ENCODE measurements at regions of chrX and their contacts with region 1.

Region 1: DNA sequence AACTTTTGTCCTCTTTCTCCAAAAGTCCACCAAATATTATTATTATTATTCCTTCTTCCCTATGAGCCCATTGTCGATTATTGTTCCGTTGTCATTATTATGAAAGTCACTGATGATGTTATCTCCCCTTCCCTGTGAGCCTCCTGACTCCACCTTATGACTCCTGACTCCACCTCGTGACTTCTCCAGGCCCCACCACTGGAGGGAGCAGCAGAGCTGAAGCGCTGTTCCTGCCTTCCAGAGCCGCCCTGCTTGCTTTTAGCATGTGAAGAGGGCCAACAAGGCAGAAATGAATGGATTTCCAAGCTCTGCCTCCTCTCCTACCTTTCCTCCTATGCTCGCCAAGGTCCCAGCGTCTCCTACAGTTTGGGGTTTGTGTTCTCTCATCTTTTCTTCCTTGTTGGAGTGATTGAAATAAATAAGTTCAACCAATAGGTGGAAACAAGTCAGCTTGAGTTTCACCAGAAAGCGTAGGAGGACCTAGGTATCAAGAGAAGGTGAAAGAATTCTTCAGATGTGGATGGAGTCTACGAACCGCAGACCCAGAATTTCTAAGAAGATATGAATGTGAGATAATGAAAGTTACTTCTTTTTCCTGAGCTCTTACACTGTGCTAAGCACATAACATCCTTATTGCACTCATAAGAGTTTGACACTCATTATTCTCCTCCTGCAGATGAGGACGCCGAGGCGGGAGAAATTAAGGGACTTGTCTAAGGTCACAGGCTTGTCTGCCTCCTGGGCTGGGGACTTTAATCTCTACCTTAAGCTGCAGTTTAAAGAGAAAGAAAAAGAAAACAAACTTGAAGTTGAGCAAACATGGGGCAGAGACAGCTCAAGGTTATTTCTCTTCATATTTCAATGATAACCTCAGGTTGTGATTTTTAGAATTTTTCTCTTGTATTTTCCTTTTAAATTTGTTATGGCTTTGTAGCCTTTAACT is 26.1 kb downstream of the IGSF1 start:
- DNase-seq: peak; percentile 43 to 64
- H3K4me3 ChIP-seq: no peak overlapping the region
- H3K4me3 Mint-ChIP-seq: no peak overlapping the region
- H3K27ac Mint-ChIP-seq: no peak overlapping the region
- H3K4me1 ChIP-seq: no peaks in the 10 kb centered on the region; the same call in 1 of the 2 replicates
- H3K4me1 Mint-ChIP-seq: no peaks in the 10 kb centered on the region
- H3K27me3 ChIP-seq: no peaks in the 10 kb centered on the region
- H3K27me3 Mint-ChIP-seq: no peaks in the 10 kb centered on the region
- CTCF ChIP-seq: peak; percentile 46 to 55

Region 2: DNA sequence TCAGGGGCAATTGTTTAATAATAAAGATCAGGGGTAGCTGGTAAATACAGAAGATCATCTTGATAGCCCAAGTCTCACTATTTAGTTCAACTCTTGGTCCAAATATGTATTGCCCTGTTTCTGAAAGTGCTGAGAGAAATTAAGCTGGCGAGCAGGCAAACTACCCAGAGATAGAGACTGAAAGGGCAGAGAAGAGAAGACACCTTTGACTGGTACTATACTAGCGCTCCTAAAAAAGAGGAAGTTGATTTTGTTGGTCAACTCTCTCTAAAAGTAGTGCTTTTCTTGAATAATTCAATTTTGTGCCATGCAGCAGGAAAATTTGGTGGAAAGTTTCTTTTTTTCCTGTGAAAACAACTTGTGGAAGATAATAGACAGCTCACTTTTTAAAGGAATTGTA is 37.9 kb before region 1 on chrX:
- CTCF ChIA-PET with region 1: no interaction called
- POLR2A ChIA-PET with region 1: no interaction called
- intact Hi-C with region 1: no loop called
- DNase-seq: no peak
- H3K4me3 ChIP-seq: no peak overlapping the region
- H3K4me3 Mint-ChIP-seq: no peak overlapping the region
- H3K27ac Mint-ChIP-seq: no peak overlapping the region
- H3K4me1 ChIP-seq: no peaks in the 10 kb centered on the region
- H3K4me1 Mint-ChIP-seq: no peaks in the 10 kb centered on the region
- H3K27me3 ChIP-seq: no peaks in the 10 kb centered on the region
- H3K27me3 Mint-ChIP-seq: peaks cover 14% of the 10 kb centered on the region
- CTCF ChIP-seq: no peak

Region 3: DNA sequence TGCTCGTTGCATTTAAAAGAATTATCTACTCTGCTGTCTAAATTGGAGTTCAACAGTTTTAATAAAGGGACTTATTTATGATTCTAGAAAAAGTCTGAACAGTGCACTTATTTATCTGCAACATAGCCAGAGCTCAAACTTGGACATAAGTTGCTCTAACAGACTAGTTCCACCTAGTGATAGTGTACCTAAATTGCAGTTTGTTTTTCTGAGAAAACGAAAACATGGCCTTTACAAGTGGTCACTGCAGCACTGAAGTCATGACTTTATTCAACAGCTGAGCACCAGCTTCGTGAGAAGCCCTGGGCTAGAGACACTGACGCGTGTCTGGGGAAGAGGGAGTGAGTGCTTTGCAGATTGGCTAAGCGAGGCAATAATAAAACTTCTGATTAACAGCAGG is 103.4 kb after region 1 on chrX:
- CTCF ChIA-PET with region 1: interaction called, 5 read pairs
- POLR2A ChIA-PET with region 1: no interaction called
- intact Hi-C with region 1: loop called (anchors 5 kb)
- DNase-seq: no peak
- H3K4me3 ChIP-seq: no peak overlapping the region
- H3K4me3 Mint-ChIP-seq: no peak overlapping the region
- H3K27ac Mint-ChIP-seq: no peak overlapping the region
- H3K4me1 ChIP-seq: no peaks in the 10 kb centered on the region
- H3K4me1 Mint-ChIP-seq: no peaks in the 10 kb centered on the region
- H3K27me3 ChIP-seq: no peaks in the 10 kb centered on the region
- H3K27me3 Mint-ChIP-seq: no peaks in the 10 kb centered on the region
- CTCF ChIP-seq: no peak

Region 4: GRCh38 chrX:131394384-131394783 is 131.4 kb after region 1 on chrX:
- CTCF ChIA-PET with region 1: no interaction called
- POLR2A ChIA-PET with region 1: no interaction called
- intact Hi-C with region 1: no loop called
- DNase-seq: no peak
- H3K4me3 ChIP-seq: no peak overlapping the region
- H3K4me3 Mint-ChIP-seq: no peak overlapping the region
- H3K27ac Mint-ChIP-seq: no peak overlapping the region
- H3K4me1 ChIP-seq: no peaks in the 10 kb centered on the region
- H3K4me1 Mint-ChIP-seq: no peaks in the 10 kb centered on the region
- H3K27me3 ChIP-seq: no peaks in the 10 kb centered on the region
- H3K27me3 Mint-ChIP-seq: no peaks in the 10 kb centered on the region
- CTCF ChIP-seq: no peak

Region 5: DNA sequence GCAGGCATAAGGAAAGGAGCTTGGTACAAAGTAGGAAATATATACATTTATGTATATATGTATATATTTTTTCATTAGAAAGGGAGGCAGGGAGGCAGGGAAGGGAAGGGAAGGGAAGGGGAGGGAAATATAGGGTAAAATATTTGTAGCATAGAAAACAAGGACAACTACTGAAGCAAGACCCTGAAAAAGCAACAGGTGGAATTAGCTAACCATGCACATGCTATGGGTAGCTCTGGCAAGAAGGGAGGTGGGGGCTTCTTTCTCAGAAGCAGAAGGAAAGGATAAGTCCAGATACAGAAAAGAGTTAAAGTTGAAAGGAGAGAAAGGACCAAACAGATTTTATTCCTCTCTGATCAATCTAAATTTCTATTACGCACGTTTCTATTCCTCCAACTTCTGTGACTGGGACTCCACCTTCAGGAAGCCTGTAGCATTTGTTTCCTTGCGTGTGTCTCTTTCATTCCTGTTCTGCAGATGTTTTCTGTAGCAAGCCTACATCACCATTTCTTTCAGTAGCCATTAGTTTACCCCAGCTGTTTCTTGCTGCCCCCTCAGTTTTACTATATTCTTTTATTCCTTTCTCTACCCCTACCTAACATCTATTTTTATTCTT is 363.8 kb after region 1 on chrX:
- CTCF ChIA-PET with region 1: no interaction called
- POLR2A ChIA-PET with region 1: no interaction called
- intact Hi-C with region 1: loop called (anchors 1 kb)
- DNase-seq: peak in 1 of 2 experiments; percentile 4
- H3K4me3 ChIP-seq: no peak overlapping the region
- H3K4me3 Mint-ChIP-seq: no peak overlapping the region
- H3K27ac Mint-ChIP-seq: no peak overlapping the region
- H3K4me1 ChIP-seq: no peaks in the 10 kb centered on the region
- H3K4me1 Mint-ChIP-seq: no peaks in the 10 kb centered on the region
- H3K27me3 ChIP-seq: no peaks in the 10 kb centered on the region
- H3K27me3 Mint-ChIP-seq: peaks cover 2% of the 10 kb centered on the region
- CTCF ChIP-seq: peak; percentile 16 to 37

Region 6: GRCh38 chrX:131677655-131678628 is 414.9 kb after region 1 on chrX:
- CTCF ChIA-PET with region 1: no interaction called
- POLR2A ChIA-PET with region 1: no interaction called
- intact Hi-C with region 1: loop called (anchors 5 kb)
- DNase-seq: peak; percentile 42 to 48
- H3K4me3 ChIP-seq: no peak overlapping the region
- H3K4me3 Mint-ChIP-seq: no peak overlapping the region
- H3K27ac Mint-ChIP-seq: no peak overlapping the region
- H3K4me1 ChIP-seq: no peaks in the 10 kb centered on the region
- H3K4me1 Mint-ChIP-seq: no peaks in the 10 kb centered on the region
- H3K27me3 ChIP-seq: no peaks in the 10 kb centered on the region
- H3K27me3 Mint-ChIP-seq: no peaks in the 10 kb centered on the region
- CTCF ChIP-seq: peak; percentile 65 to 70

Measured in Caco-2 (cell line).